Activated T-helper 2 cell treated with anti-CD3 and anti-CD28 coated beads, Interferon-gamma antibody, Interleukin-2, Interleukin-4, amounts not matched to agents 10 μg/mL and 5 μg/mL and 100 μg/mL, durations not matched to agents 14 hours and 24 hours and 36 hours (primary cell): ENCODE measurements at regions of chr7 and their contacts with region 1.

Region 1: DNA sequence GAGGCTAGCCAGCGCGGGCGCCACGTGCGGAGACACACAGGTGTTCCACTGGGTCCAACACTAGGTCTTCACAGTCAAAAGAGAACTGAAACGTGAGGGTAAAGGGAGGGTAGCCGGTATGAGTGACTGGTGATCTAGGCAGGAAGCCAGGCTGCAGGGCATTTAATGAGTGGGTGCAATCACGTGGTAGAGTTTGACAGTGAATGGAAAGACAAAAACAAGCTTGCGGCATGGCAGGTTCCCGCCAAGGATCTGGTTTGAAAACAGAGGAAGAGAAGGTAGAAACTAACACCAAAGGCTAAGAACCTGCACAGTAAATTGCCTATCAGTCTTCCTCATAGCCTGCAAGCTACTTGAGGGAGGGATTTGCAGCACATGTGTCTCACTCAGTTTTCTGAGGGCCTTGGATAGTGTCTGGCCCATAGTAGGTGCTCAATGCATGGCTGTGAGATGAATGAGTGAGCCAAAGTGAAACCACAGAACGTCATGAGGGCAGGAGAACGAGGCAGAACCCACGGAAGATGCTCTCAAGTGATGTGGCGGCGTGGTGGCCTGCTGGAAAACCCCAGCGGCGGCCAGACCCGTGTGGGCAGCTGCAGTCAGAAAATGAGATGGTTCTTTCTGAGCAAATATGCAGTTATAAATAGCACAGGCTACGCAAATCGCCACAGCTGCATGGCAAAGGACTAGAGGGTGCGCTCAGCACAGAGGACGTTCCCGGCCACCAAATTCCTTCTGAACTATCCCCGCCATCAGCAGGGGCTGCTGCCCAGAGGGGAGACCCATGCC is 183.6 kb upstream of the NFE2L3 start:
- DNase-seq: no peak
- H3K4me3 Mint-ChIP-seq: no peak overlapping the region
- H3K27ac Mint-ChIP-seq: peak overlapping the region; percentile 35
- H3K4me1 Mint-ChIP-seq: peaks cover 19% of the 10 kb centered on the region
- H3K27me3 Mint-ChIP-seq: peaks cover 31% of the 10 kb centered on the region

Region 2: DNA sequence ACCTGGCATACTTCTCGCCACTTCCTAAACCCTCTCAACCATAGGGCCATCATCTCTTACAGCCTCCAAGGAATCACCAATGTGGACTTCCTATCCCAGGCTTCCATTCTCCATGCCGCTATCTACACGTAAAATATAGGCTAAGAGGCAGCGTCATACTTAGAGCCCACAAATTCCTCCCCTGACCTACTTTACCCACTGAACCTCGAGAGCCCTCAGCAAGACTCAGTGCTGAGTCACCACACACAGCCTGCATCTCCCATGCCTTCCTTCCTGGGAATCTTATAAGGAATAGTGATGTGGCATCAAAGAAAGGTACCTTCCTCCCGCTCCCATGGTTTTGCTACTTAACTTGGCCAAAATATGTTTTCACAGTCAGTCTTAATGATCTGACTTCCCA is 252.0 kb before region 1 on chr7:
- intact Hi-C with region 1: no loop called
- DNase-seq: no peak
- H3K4me3 Mint-ChIP-seq: no peak overlapping the region
- H3K27ac Mint-ChIP-seq: no peak overlapping the region
- H3K4me1 Mint-ChIP-seq: peaks cover 3% of the 10 kb centered on the region
- H3K27me3 Mint-ChIP-seq: peaks cover 6% of the 10 kb centered on the region

Region 3: DNA sequence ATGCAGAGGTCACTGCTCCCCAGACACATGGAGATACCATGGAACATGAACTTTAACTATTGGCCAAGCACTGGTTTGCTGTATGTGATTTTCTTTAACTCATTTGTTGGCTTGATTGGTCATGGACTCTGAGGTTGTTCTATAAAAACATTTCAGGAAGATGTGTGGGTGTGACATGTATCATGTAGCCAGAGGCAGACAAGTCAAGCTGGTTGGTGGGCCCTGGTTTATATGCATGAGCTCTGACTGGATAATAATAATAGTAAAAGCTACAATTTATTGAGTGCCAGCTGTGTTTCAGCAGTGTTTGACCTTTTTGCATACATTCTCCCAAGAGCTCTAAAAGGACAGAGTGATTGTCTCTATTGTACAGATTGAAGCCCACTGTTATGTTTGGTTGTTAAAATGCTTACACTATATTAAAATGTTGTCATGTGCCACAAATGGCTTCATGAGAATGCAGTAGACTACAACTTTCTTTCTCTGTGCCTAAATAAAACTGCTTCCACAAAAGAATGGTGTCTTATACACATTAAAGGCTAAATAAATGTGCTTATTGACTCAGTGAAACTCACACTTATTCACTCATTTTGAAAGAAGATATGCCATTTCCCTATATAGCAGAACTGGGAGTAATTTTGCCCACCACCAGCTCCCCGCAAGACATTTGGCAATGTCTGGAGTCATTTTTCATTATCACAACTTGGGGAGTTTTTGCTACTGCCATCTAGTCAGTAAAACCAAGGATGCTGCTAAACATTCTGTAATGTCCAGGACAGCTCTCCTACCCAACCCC is 60.0 kb before region 1 on chr7:
- intact Hi-C with region 1: loop called (anchors 2 kb)
- DNase-seq: no peak
- H3K4me3 Mint-ChIP-seq: no peak overlapping the region
- H3K27ac Mint-ChIP-seq: no peak overlapping the region
- H3K4me1 Mint-ChIP-seq: peaks cover 4% of the 10 kb centered on the region
- H3K27me3 Mint-ChIP-seq: peaks cover 6% of the 10 kb centered on the region